ENCODE measurements at regions of chr6 and their contacts with region 1.

Region 1: DNA sequence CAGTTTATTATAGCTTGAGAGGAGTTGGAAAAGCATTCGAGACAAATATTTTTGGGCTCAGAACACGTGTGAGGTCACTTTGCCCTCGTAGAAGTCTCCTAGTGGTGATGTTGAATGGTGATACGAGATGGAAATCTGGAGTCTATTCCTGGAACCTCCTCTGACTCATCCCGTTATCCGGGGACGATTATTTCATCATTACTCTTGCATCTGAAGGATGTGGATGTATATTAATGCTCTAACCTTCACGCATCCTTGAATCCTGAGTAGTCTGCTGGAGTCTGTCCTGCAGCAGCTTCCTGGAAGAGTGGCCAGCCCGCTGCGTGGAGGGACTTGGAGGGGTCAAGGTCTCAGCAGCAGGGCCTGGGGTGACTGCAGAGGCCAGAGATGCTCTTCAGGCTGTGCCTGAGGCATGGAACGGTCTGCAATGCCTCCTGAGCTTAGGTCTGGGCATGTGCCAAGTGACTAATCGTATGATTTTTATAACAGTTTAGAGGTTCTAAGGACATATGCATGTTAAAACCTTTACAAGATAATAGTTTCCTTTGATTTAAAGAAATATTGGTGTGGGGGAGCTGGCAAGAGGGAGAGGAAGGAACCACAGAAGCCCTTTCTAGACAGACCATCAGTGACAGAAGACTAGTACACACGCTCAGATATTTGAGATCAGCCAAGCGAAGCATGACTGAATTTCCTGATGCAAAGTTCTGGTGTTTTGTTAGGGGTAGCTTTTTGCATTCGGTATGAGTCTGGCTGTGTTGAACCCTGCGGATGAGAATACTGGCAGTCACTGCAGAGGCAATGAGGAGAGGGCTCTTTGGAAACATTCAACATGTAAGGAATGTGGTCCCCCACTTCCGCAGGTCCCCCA is 400.2 kb downstream of the QKI start:
- DNase-seq: no peak
- ATAC-seq: peak; percentile 45
- H3K4me3 Mint-ChIP-seq: peak overlapping the region; percentile 63
- H3K27ac Mint-ChIP-seq: no peak overlapping the region
- H3K4me1 Mint-ChIP-seq: peaks cover 32% of the 10 kb centered on the region
- H3K27me3 Mint-ChIP-seq: peaks cover 2% of the 10 kb centered on the region
- CTCF ChIP-seq: no peak

Region 2: GRCh38 chr6:163460307-163460782 is 354.4 kb before region 1 on chr6:
- CTCF ChIA-PET with region 1: no interaction called
- POLR2A ChIA-PET with region 1: no interaction called
- intact Hi-C with region 1: no loop called
- DNase-seq: no peak
- ATAC-seq: peak; percentile 87
- H3K4me3 Mint-ChIP-seq: peak overlapping the region; percentile 89
- H3K27ac Mint-ChIP-seq: peak overlapping the region; percentile 89
- H3K4me1 Mint-ChIP-seq: peaks cover 58% of the 10 kb centered on the region
- H3K27me3 Mint-ChIP-seq: no peaks in the 10 kb centered on the region
- CTCF ChIP-seq: no peak

Region 3: DNA sequence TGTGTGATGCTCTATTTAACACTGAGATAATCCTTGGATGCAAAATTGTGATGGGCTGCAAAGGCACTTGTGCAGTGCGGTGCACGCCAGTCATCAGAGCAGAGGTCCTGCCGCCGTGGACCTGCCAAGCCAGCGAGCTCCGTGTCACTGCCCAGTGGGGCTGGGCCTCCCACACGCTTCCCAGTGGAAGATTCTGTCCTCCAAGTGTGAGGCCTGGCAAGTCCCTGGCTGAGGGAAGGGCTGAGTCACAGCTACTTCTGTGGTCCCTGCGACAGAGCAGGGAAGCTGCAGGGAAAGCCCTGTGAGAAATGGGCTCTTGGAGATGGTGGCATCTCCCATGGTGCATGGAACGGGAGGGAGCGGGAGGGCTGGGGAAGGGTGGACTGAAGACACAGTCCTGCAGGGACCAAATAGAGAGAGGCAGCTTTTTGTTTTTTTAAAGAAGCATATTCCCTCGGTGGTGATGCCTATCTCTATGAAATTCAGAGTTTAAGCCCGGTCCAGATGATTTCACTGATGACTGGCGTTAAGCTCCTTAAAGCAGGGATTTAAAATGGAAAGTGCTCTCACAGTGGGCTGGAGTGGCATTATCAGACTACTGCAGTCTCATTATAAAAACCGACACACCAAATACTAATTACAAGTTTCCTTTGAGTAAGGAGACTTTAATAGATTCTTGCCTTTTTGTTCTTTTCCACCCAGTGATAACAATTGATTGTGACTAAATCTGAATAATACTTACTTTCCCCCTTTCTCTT is 13.5 kb after region 1 on chr6:
- CTCF ChIA-PET with region 1: no interaction called
- POLR2A ChIA-PET with region 1: no interaction called
- intact Hi-C with region 1: no loop called
- DNase-seq: no peak
- ATAC-seq: no peak
- H3K4me3 Mint-ChIP-seq: no peak overlapping the region
- H3K27ac Mint-ChIP-seq: no peak overlapping the region
- H3K4me1 Mint-ChIP-seq: no peaks in the 10 kb centered on the region
- H3K27me3 Mint-ChIP-seq: peaks cover 11% of the 10 kb centered on the region
- CTCF ChIP-seq: no peak

Region 4: GRCh38 chr6:163860287-163861081 is 45.8 kb after region 1 on chr6:
- CTCF ChIA-PET with region 1: no interaction called
- POLR2A ChIA-PET with region 1: interaction called, 10 read pairs
- intact Hi-C with region 1: no loop called
- DNase-seq: no peak
- ATAC-seq: no peak
- H3K4me3 Mint-ChIP-seq: no peak overlapping the region
- H3K27ac Mint-ChIP-seq: no peak overlapping the region
- H3K4me1 Mint-ChIP-seq: peaks cover 13% of the 10 kb centered on the region
- H3K27me3 Mint-ChIP-seq: peaks cover 24% of the 10 kb centered on the region
- CTCF ChIP-seq: no peak